Caco-2 (cell line): ENCODE measurements at regions of chr12 and their contacts with region 1.

Region 1: GRCh38 chr12:22083167-22083566 is 37.1 kb downstream of the CMAS start:
- DNase-seq: peak in 1 of 2 experiments; percentile 36
- H3K4me3 ChIP-seq: no peak overlapping the region
- H3K4me3 Mint-ChIP-seq: no peak overlapping the region
- H3K27ac Mint-ChIP-seq: no peak overlapping the region
- H3K4me1 ChIP-seq: peaks cover 16% of the 10 kb centered on the region; the same call in 1 of the 2 replicates
- H3K4me1 Mint-ChIP-seq: peaks cover 11% of the 10 kb centered on the region
- H3K27me3 ChIP-seq: no peaks in the 10 kb centered on the region; the same call in 1 of the 2 replicates
- H3K27me3 Mint-ChIP-seq: peaks cover 6% of the 10 kb centered on the region
- CTCF ChIP-seq: peak; percentile 52 to 79

Region 2: DNA sequence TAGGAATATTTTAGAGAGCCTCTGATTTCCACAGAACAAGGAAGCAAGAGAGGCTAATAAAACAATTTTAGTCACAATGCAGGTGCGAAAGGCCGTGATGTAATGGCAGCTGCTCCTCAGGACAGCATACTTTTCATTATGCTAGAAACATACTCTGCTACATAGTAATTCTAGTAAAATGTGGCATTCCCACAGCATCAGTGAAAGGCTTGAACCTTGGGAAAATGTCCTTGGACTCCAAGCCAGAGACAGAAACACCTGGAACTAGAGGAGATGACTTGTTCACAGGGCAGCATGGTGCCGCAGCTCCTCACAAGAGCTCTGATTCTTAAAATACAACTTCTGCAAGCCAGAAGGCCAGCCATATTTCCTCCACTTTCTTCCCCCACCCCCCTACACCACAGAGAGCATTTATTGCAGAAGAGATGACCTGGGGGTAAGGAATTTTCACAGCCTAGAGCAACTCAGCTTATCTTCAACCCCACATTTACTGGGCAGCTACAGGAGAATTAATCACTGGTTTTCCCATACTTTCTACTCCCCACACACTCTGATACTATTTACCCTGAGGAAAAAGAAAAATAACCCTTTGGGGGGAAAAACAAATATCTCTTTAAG is 157.8 kb before region 1 on chr12:
- CTCF ChIA-PET with region 1: no interaction called
- POLR2A ChIA-PET with region 1: no interaction called
- intact Hi-C with region 1: no loop called
- DNase-seq: no peak
- H3K4me3 ChIP-seq: no peak overlapping the region
- H3K4me3 Mint-ChIP-seq: no peak overlapping the region
- H3K27ac Mint-ChIP-seq: no peak overlapping the region
- H3K4me1 ChIP-seq: no peaks in the 10 kb centered on the region
- H3K4me1 Mint-ChIP-seq: no peaks in the 10 kb centered on the region
- H3K27me3 ChIP-seq: no peaks in the 10 kb centered on the region
- H3K27me3 Mint-ChIP-seq: no peaks in the 10 kb centered on the region
- CTCF ChIP-seq: no peak

Region 3: GRCh38 chr12:22018860-22019259 is 64.3 kb before region 1 on chr12:
- CTCF ChIA-PET with region 1: no interaction called
- POLR2A ChIA-PET with region 1: no interaction called
- intact Hi-C with region 1: no loop called
- DNase-seq: no peak
- H3K4me3 ChIP-seq: no peak overlapping the region
- H3K4me3 Mint-ChIP-seq: no peak overlapping the region
- H3K27ac Mint-ChIP-seq: no peak overlapping the region
- H3K4me1 ChIP-seq: no peaks in the 10 kb centered on the region
- H3K4me1 Mint-ChIP-seq: no peaks in the 10 kb centered on the region
- H3K27me3 ChIP-seq: no peaks in the 10 kb centered on the region
- H3K27me3 Mint-ChIP-seq: no peaks in the 10 kb centered on the region
- CTCF ChIP-seq: peak; percentile 34 to 77

Region 4: DNA sequence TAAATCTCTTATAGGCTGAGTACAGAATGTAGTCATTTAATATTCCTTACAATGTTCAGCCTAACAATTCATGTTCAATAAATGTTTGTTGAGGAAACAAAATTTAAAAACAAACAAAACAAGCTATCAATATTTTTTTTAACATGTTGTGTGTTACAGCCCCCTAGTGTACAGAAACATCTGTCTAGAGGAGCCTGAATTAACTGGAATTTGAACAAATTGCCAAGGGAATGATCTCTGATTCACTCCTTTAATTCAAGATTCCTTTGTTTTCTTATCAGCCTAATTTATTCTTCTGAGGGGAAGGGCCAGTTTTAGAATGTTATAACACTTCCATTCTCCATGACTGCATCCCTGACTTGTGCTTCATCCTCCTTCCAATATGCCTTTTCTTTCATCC is 90.0 kb after region 1 on chr12:
- CTCF ChIA-PET with region 1: interaction called, 4 read pairs
- POLR2A ChIA-PET with region 1: no interaction called
- intact Hi-C with region 1: loop called (anchors 2 kb)
- DNase-seq: no peak
- H3K4me3 ChIP-seq: no peak overlapping the region
- H3K4me3 Mint-ChIP-seq: no peak overlapping the region
- H3K27ac Mint-ChIP-seq: no peak overlapping the region
- H3K4me1 ChIP-seq: no peaks in the 10 kb centered on the region
- H3K4me1 Mint-ChIP-seq: no peaks in the 10 kb centered on the region
- H3K27me3 ChIP-seq: no peaks in the 10 kb centered on the region
- H3K27me3 Mint-ChIP-seq: peaks cover 7% of the 10 kb centered on the region
- CTCF ChIP-seq: no peak

Region 5: DNA sequence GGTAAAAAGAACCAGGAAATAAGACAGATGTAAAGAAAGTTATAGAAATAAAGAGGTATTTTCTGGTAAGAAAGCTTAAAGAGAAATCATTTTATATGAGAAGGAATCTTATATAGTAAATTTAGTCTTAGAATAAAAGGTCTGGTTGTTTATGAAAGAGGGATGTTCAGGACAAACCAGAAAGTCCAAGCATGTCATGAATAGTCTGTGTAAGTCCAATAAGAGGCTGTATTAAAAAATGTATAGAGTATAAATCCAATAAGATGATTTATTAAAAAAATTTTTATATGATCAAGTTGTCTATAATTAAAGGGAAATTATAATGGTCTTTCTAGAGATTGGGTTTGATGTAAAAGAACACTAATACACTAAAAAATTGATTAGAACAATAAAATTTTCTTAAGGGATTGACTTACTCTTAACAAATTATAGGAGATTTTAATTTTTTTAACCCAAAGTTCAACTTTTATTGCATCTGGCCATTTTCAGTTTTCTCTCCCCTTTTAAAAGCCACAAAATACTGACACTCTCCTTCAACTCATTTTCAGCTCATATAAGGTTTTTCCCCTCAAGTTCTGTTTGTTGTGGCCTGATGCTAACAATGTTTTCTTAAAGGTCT is 216.2 kb after region 1 on chr12:
- CTCF ChIA-PET with region 1: no interaction called
- POLR2A ChIA-PET with region 1: no interaction called
- intact Hi-C with region 1: no loop called
- DNase-seq: peak in 1 of 2 experiments; percentile 32
- H3K4me3 ChIP-seq: no peak overlapping the region
- H3K4me3 Mint-ChIP-seq: no peak overlapping the region
- H3K27ac Mint-ChIP-seq: no peak overlapping the region
- H3K4me1 ChIP-seq: no peaks in the 10 kb centered on the region
- H3K4me1 Mint-ChIP-seq: no peaks in the 10 kb centered on the region
- H3K27me3 ChIP-seq: no peaks in the 10 kb centered on the region
- H3K27me3 Mint-ChIP-seq: no peaks in the 10 kb centered on the region
- CTCF ChIP-seq: no peak

Region 6: GRCh38 chr12:22334410-22335290 is 251.5 kb after region 1 on chr12 and contains the start of gene ST8SIA1:
- CTCF ChIA-PET with region 1: interaction called, 3 read pairs
- POLR2A ChIA-PET with region 1: no interaction called
- intact Hi-C with region 1: loop called (anchors 1 kb)
- DNase-seq: no peak
- H3K4me3 ChIP-seq: peak within 1 kb of the TSS; percentile 53
- H3K4me3 Mint-ChIP-seq: peak within 1 kb of the TSS; percentile 82
- H3K27ac Mint-ChIP-seq: no peak within 1 kb of the TSS
- H3K4me1 ChIP-seq: peaks cover 6% of the 10 kb centered on the region; the same call in 1 of the 2 replicates
- H3K4me1 Mint-ChIP-seq: no peaks in the 10 kb centered on the region
- H3K27me3 ChIP-seq: no peaks in the 10 kb centered on the region; the same call in 1 of the 2 replicates
- H3K27me3 Mint-ChIP-seq: peaks cover 25% of the 10 kb centered on the region
- CTCF ChIP-seq: no peak
- total RNA-seq, gene ST8SIA1: not detected in 2 replicates

Region 7: DNA sequence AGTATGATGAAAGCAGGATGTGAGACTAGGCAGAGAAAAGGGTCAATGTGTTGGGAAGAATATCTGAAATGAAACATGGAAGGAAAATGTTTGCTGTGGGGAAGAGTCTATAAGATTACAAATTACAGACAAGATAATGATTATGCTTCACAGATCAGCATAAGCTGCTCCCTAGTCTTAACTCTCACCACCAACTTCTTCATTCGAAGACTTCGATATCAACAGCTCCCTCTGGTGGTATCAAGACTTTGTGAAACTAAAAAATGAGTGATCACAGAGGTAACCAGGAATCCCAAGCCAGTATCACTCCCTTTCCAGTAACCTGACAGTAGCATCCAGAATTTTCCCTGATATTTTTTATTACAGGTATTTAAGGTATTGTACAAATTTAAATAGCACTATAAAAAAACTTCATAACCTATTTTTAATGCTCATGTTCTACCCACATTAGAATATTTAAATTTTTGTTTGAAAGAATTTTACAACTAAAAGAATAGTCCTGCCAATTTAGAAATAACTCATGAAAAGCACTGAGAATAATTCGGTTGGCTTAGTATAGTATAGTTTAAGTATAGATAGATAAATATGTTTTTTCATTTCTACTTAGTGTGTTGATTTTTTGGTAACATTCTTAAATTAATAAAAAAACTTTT is 376.8 kb after region 1 on chr12:
- CTCF ChIA-PET with region 1: no interaction called
- POLR2A ChIA-PET with region 1: interaction called, 4 read pairs
- intact Hi-C with region 1: loop called (anchors 1 kb)
- DNase-seq: peak in 1 of 2 experiments; percentile 58
- H3K4me3 ChIP-seq: no peak overlapping the region
- H3K4me3 Mint-ChIP-seq: no peak overlapping the region
- H3K27ac Mint-ChIP-seq: no peak overlapping the region
- H3K4me1 ChIP-seq: no peaks in the 10 kb centered on the region
- H3K4me1 Mint-ChIP-seq: no peaks in the 10 kb centered on the region
- H3K27me3 ChIP-seq: no peaks in the 10 kb centered on the region
- H3K27me3 Mint-ChIP-seq: no peaks in the 10 kb centered on the region
- CTCF ChIP-seq: peak; percentile 78 to 82